ENCODE measurements at regions of chr2 and their contacts with region 1.

Region 1: GRCh38 chr2:211664321-211664720 is 874.3 kb downstream of the ERBB4 start:
- DNase-seq: no peak
- H3K4me3 ChIP-seq: no peak overlapping the region
- H3K4me3 Mint-ChIP-seq: no peak overlapping the region
- H3K27ac Mint-ChIP-seq: no peak overlapping the region
- H3K4me1 ChIP-seq: no peaks in the 10 kb centered on the region
- H3K4me1 Mint-ChIP-seq: no peaks in the 10 kb centered on the region
- H3K27me3 ChIP-seq: no peaks in the 10 kb centered on the region
- H3K27me3 Mint-ChIP-seq: peaks cover 3% of the 10 kb centered on the region
- CTCF ChIP-seq: no peak

Region 2: DNA sequence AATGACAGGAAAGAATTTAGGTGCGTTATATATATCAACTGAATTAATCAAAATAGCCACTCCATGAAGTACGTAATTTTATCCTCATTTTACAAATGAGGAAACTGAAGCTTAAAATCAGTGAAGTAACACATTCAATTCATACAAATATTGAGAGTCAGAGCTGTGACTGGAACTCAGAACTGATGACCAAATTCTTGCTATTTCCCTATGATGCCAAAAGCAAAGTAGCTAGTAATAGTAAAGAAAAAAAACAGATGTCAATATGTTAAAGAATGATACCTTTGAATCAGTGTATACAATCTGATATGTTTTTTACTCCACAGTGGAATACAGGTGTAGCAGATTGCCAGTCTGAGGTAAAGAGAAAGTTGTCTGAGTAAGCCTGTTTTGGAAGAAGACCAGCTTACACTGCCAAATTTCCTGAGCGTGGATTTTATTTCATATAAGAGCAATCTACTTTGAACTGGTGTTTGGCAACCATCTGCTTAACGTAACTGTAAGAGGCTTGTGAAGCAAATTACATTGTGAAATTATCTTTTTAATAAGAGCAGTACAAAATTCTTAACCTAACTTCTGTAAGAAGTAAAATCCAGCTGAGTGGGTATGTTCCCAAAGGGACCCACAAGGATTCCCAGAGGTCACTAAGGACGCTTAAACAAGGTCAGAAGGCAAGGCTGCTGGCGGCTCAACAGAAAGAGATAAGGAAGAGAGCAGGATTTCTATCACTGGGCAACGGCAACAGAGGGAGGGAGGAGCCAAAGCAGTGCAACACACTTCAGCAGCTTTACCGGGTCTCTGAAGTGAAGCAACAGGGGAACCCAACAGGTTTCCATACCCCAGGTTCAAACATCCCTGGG is 1401.5 kb after region 1 on chr2:
- CTCF ChIA-PET with region 1: no interaction called
- POLR2A ChIA-PET with region 1: no interaction called
- intact Hi-C with region 1: loop called (anchors 5 kb)
- DNase-seq: peak; percentile 43 to 44
- H3K4me3 ChIP-seq: no peak overlapping the region
- H3K4me3 Mint-ChIP-seq: peak overlapping the region; percentile 46
- H3K27ac Mint-ChIP-seq: no peak overlapping the region
- H3K4me1 ChIP-seq: no peaks in the 10 kb centered on the region
- H3K4me1 Mint-ChIP-seq: peaks cover 14% of the 10 kb centered on the region
- H3K27me3 ChIP-seq: no peaks in the 10 kb centered on the region
- H3K27me3 Mint-ChIP-seq: no peaks in the 10 kb centered on the region
- CTCF ChIP-seq: no peak

Measured in Caco-2 (cell line).